ENCODE measurements at regions of chr11 and their contacts with region 1.

Region 1: DNA sequence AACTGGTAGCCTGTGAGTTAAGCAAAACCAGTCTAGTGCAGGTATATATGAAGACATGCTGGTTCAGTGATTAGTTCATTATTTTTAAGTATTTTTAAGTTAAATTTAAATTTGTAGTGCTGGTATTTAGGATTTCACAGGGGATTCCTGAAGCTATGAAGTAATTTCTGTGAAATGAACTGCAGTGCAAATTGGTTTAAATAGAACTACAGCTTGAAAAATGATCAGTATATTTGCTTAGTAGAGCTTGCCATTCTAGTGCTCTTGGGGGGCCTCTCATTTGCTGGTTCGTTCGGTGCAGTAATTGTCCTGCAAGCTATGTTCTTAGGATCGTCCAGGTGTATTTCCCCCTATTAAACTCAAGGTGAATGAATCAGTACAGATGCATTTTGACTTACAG is 13.1 kb downstream of the REXO2 start:
- DNase-seq: no peak
- ATAC-seq: no peak
- H3K4me3 Mint-ChIP-seq: no peak overlapping the region
- H3K27ac Mint-ChIP-seq: no peak overlapping the region
- H3K4me1 Mint-ChIP-seq: peaks cover 20% of the 10 kb centered on the region
- H3K27me3 Mint-ChIP-seq: no peaks in the 10 kb centered on the region
- CTCF ChIP-seq: no peak

Region 2: GRCh38 chr11:114044042-114044871 is 408.1 kb before region 1 on chr11:
- CTCF ChIA-PET with region 1: no interaction called
- POLR2A ChIA-PET with region 1: interaction called, 10 read pairs
- DNase-seq: no peak
- ATAC-seq: peak; percentile 74
- H3K4me3 Mint-ChIP-seq: no peak overlapping the region
- H3K27ac Mint-ChIP-seq: no peak overlapping the region
- H3K4me1 Mint-ChIP-seq: peaks cover 15% of the 10 kb centered on the region
- H3K27me3 Mint-ChIP-seq: no peaks in the 10 kb centered on the region; the same call in 1 of the 2 replicates
- CTCF ChIP-seq: no peak

Region 3: DNA sequence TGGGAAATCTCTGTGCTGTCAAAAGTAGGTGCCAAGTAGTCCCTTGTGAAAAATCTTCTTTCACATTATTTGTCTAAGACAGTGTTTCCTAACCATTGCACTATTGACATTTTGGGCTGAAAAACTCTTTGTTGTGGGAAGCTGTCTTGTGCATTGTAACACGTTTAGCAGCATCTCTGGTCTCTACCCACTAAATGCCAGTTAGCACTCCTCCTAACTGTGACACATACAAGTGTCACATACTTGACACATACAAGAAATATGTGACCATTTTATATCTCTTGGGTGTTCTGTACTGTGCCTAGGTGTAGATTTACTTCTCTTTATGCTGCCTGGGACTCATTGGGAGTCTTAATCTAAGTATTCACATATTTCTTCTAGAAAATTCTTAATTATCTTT is 49.5 kb after region 1 on chr11:
- CTCF ChIA-PET with region 1: no interaction called
- POLR2A ChIA-PET with region 1: no interaction called
- DNase-seq: no peak
- ATAC-seq: no peak
- H3K4me3 Mint-ChIP-seq: no peak overlapping the region
- H3K27ac Mint-ChIP-seq: no peak overlapping the region
- H3K4me1 Mint-ChIP-seq: peaks cover 2% of the 10 kb centered on the region; the same call in 1 of the 2 replicates
- H3K27me3 Mint-ChIP-seq: no peaks in the 10 kb centered on the region
- CTCF ChIP-seq: no peak

Region 4: GRCh38 chr11:114563077-114563476 is 110.7 kb after region 1 on chr11:
- CTCF ChIA-PET with region 1: no interaction called
- POLR2A ChIA-PET with region 1: no interaction called
- DNase-seq: no peak
- ATAC-seq: no peak
- H3K4me3 Mint-ChIP-seq: no peak overlapping the region
- H3K27ac Mint-ChIP-seq: no peak overlapping the region
- H3K4me1 Mint-ChIP-seq: peaks cover 29% of the 10 kb centered on the region
- H3K27me3 Mint-ChIP-seq: no peaks in the 10 kb centered on the region
- CTCF ChIP-seq: no peak